Testis (tissue), 5 donors: ENCODE measurements at regions of chr4 and their contacts with region 1.

Region 1: GRCh38 chr4:20532871-20533870 is 167.1 kb upstream of the PACRGL start:
- DNase-seq: no peak
- H3K4me3 ChIP-seq: no peak overlapping the region
- H3K27ac ChIP-seq: no peak overlapping the region
- H3K4me1 ChIP-seq: no peaks in the 10 kb centered on the region
- H3K27me3 ChIP-seq: no peaks in the 10 kb centered on the region
- CTCF ChIP-seq: no peak
- POLR2A ChIP-seq: no peak

Region 2: DNA sequence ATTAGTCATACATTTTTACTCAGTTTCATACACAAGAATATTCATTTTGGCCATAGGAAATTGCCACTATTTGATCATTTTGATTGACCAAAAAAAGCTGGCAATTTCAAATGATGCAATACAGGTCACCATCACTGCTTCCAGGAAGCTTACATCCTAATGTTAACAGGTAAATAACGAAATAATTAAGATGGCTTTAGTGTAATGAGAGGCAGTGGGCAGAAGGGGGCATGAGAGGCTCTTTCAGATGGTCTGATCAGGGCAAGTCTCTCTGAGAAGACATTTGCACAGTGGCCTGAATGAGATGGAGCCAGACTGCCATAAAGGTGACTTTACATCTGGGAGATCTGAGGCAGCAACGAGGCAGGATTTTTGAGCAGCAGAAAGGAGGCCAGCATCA is 110.8 kb before region 1 on chr4:
- intact Hi-C with region 1: loop called (anchors 10 kb)
- DNase-seq: peak; percentile 71
- H3K4me3 ChIP-seq: no peak overlapping the region
- H3K27ac ChIP-seq: no peak overlapping the region
- H3K4me1 ChIP-seq: no peaks in the 10 kb centered on the region
- H3K27me3 ChIP-seq: no peaks in the 10 kb centered on the region
- CTCF ChIP-seq: peak; percentile 56 to 70 (median 61)
- POLR2A ChIP-seq: no peak

Region 3: DNA sequence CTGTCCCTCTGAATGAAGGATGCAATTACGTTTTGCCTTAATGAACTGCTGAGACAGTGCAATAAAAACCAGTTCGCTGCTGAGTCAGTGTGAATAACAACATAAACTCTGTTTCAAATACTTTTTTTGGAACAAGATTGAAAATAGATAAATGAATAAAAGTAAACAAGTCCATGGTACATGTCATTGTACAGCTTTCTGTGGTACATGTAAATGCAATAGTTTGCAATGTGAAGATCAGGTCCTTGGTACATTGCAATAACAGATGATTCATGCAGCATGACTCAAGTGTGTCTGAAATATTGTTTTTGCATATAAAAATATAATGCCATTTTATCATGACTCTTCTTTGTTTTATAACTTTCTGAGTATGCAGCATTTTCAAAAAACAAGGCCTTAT is 26.3 kb before region 1 on chr4:
- intact Hi-C with region 1: no loop called
- DNase-seq: no peak
- H3K4me3 ChIP-seq: no peak overlapping the region
- H3K27ac ChIP-seq: no peak overlapping the region
- H3K4me1 ChIP-seq: no peaks in the 10 kb centered on the region
- H3K27me3 ChIP-seq: no peaks in the 10 kb centered on the region
- CTCF ChIP-seq: no peak
- POLR2A ChIP-seq: no peak

Region 4: GRCh38 chr4:20839957-20840356 is 306.8 kb after region 1 on chr4:
- intact Hi-C with region 1: no loop called
- DNase-seq: no peak
- H3K4me3 ChIP-seq: no peak overlapping the region
- H3K27ac ChIP-seq: no peak overlapping the region
- H3K4me1 ChIP-seq: no peaks in the 10 kb centered on the region
- H3K27me3 ChIP-seq: no peaks in the 10 kb centered on the region
- CTCF ChIP-seq: no peak
- POLR2A ChIP-seq: no peak